Ascending aorta (tissue), 2 donors: ENCODE measurements at regions of chr20 and their contacts with region 1.

Region 1: DNA sequence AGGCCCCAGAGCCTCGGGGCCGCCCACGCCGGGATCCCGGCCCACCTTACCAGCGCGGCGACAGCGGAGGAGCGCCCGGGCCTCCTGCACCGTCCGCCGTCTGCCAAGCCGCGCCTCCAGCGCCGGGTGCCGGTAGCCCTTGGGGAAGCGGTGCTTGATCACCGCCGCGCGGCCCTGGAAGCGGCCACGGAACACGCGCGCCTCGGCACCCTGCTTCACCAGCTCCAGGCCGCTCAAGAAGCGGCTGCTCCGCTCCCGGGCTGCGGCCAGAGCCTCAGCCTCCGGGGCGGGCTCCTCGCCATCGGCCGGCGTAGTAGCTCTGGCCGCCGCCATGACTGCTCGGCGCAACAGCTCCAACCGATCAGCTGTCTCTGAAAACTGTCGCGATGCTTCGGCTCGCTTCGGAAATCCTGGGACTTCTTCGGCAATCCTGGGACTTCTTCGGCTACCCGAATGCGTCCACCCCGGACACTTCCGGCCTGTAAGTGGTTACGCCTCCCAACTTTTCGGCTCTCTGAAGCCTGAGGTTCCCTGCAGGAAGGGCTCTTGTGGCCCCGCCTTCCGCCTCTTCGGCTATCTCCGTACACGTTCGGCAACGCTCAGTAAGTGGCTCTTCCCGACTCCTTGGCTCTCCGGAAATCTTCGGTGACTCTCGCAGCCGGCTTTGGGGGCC is at the start of gene TP53RK:
- DNase-seq: peak; percentile 98 to 99
- H3K4me3 ChIP-seq: peak within 1 kb of the TSS; percentile 66 to 69
- H3K27ac ChIP-seq: peak within 1 kb of the TSS; percentile 84 to 89
- H3K4me1 ChIP-seq: peaks cover 9 to 14% of the 10 kb centered on the region in 2 donors
- H3K27me3 ChIP-seq: no peaks in the 10 kb centered on the region
- CTCF ChIP-seq: peak; percentile 38 to 62 (median 41)
- total RNA-seq, gene TP53RK: 30.8 TPM

Region 2: GRCh38 chr20:46089417-46090388 is 599.5 kb before region 1 on chr20 and contains the start of gene NCOA5:
- intact Hi-C with region 1: loop called (anchors 2 kb)
- DNase-seq: peak; percentile 76 to 97
- H3K4me3 ChIP-seq: peak within 1 kb of the TSS; percentile 75 to 97
- H3K27ac ChIP-seq: peak within 1 kb of the TSS; percentile 99
- H3K4me1 ChIP-seq: peaks cover 3 to 36% of the 10 kb centered on the region in 2 donors
- H3K27me3 ChIP-seq: no peaks in the 10 kb centered on the region
- CTCF ChIP-seq: peak in 1 of 3 experiments; percentile 27
- total RNA-seq, gene NCOA5: 70.4 TPM

Region 3: GRCh38 chr20:46117704-46118467 is 571.3 kb before region 1 on chr20 and contains the start of gene CD40:
- intact Hi-C with region 1: loop called (anchors 10 kb)
- DNase-seq: peak; percentile 76 to 96
- H3K4me3 ChIP-seq: peak within 1 kb of the TSS; percentile 52 to 64
- H3K27ac ChIP-seq: peak within 1 kb of the TSS; percentile 81 to 87
- H3K4me1 ChIP-seq: peaks cover 0 to 3% of the 10 kb centered on the region in 2 donors
- H3K27me3 ChIP-seq: no peaks in the 10 kb centered on the region
- CTCF ChIP-seq: no peak
- total RNA-seq, gene CD40: 34.7 TPM

Region 4: GRCh38 chr20:46709459-46710152 is 20.4 kb after region 1 on chr20 and contains the start of gene SLC2A10:
- intact Hi-C with region 1: loop called (anchors 1 kb)
- DNase-seq: peak in 1 of 2 donors; percentile 79
- H3K4me3 ChIP-seq: peak within 1 kb of the TSS; percentile 69 to 81
- H3K27ac ChIP-seq: peak within 1 kb of the TSS; percentile 61 to 74
- H3K4me1 ChIP-seq: peaks cover 0 to 5% of the 10 kb centered on the region in 2 donors
- H3K27me3 ChIP-seq: no peaks in the 10 kb centered on the region
- CTCF ChIP-seq: peak in 2 of 3 experiments; percentile 10 to 23
- total RNA-seq, gene SLC2A10: 13.1 TPM